AG04449 (cell line): ENCODE measurements at regions of chr7 and their contacts with region 1.

Region 1: DNA sequence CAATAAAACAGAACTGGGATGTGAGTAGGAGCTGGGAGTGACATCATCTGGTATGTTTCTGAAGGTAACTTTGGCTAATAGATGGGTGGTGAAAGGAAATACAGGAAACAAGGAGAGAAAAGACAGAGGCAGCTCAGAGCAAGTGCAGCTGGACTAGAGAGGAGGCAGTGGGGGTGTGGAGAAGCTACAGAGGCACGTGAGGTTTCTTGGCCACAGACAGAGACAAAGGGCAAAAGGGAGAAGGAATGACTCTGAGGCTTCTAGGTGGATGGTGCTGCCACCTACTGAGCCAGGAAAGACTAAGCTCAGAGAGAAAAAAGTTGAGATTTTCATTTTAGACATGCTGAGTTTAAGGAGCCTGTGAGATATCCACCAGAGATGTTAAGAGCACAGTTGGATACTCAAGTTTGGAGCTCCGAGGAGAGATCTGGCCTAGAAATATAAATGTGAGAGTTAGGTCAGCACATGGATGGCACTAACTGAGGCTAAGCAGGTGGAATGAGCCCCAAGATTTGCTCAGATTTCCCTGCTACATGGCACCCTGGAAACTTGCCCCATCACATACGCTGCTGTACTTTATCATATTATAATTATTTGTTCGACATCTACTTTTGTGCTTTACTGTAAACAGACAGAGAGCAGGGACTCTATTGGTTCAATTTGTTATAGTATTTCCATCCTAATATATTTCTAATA is 293.0 kb upstream of the IMMP2L start:
- DNase-seq: peak; percentile 9
- H3K4me3 ChIP-seq: no peak overlapping the region
- CTCF ChIP-seq: peak; percentile 65

Region 2: GRCh38 chr7:111525100-111525499 is 330.2 kb before region 1 on chr7:
- CTCF ChIA-PET with region 1: no interaction called
- POLR2A ChIA-PET with region 1: no interaction called
- DNase-seq: no peak
- H3K4me3 ChIP-seq: no peak overlapping the region
- CTCF ChIP-seq: no peak

Region 3: GRCh38 chr7:111741811-111742240 is 113.5 kb before region 1 on chr7:
- CTCF ChIA-PET with region 1: interaction called, 112 read pairs
- POLR2A ChIA-PET with region 1: interaction called, 3 read pairs
- DNase-seq: no peak
- H3K4me3 ChIP-seq: no peak overlapping the region
- CTCF ChIP-seq: peak; percentile 62

Region 4: GRCh38 chr7:111763221-111763801 is 92.0 kb before region 1 on chr7:
- CTCF ChIA-PET with region 1: interaction called, 549 read pairs
- POLR2A ChIA-PET with region 1: no interaction called
- DNase-seq: no peak
- H3K4me3 ChIP-seq: no peak overlapping the region
- CTCF ChIP-seq: peak; percentile 68

Region 5: GRCh38 chr7:111835066-111835465 is 20.2 kb before region 1 on chr7:
- CTCF ChIA-PET with region 1: interaction called, 83 read pairs
- POLR2A ChIA-PET with region 1: no interaction called
- DNase-seq: peak; percentile 72
- H3K4me3 ChIP-seq: no peak overlapping the region
- CTCF ChIP-seq: no peak

Region 6: GRCh38 chr7:111867348-111867931 is 12.1 kb after region 1 on chr7:
- CTCF ChIA-PET with region 1: interaction called, 104 read pairs
- POLR2A ChIA-PET with region 1: no interaction called
- DNase-seq: no peak
- H3K4me3 ChIP-seq: no peak overlapping the region
- CTCF ChIP-seq: no peak

Region 7: GRCh38 chr7:112405286-112405685 is 550.0 kb after region 1 on chr7:
- CTCF ChIA-PET with region 1: interaction called, 16 read pairs
- POLR2A ChIA-PET with region 1: no interaction called
- DNase-seq: no peak
- H3K4me3 ChIP-seq: no peak overlapping the region
- CTCF ChIP-seq: no peak